Breast epithelium (tissue), 4 donors: ENCODE measurements at regions of chr10 and their contacts with region 1.

Region 1: DNA sequence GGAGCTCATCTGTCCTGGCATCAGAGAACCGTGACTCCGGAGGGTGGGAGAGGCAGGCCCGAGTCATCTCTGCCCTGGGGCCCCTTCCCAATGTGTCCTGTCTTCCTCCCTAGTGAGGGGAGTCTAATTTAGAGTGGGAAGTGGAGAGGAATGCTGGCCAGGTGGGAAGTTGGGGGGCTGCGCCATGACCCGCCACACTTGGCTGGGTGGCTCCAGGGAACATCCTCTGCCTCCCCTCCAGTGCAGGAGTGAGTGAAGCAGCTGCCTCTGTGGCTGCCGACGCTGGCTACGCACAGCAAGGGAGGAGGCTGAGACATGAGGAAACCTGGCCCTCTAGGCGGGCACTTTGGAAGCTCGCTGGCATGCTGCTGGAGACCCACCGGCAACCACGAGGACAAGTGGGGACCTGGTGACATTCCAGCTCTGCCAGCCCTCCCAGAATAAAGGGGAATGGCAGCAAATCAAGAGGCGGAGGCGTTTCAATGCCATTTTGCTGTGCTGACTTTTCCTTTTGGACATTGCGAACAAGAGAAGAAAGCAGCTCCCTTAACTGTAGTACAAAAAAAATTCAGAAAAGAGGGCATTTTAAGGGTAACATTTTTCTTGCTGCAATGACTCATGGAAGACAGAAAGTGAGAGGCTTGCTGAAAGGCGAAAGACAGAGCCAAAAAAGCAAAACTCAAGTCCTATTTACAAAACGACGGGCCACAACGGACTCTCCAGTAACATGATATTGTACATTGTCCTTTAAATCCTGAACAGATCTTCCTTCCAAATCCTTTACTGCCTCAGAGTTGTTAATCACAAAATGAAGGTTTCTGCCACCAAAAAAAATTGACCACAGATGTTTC is 121.2 kb upstream of the PITRM1 start:
- DNase-seq: peak in 1 of 2 donors; percentile 65
- H3K4me3 ChIP-seq: peak overlapping the region in 1 of 3 donors; percentile 1
- H3K27ac ChIP-seq: peak overlapping the region; percentile 65 to 81
- H3K4me1 ChIP-seq: no peaks in the 10 kb centered on the region
- H3K27me3 ChIP-seq: no peaks in the 10 kb centered on the region
- CTCF ChIP-seq: no peak
- POLR2A ChIP-seq: no peak

Region 2: GRCh38 chr10:2076528-2076927 is 1217.3 kb before region 1 on chr10:
- intact Hi-C with region 1: no loop called
- DNase-seq: no peak
- H3K4me3 ChIP-seq: no peak overlapping the region
- H3K27ac ChIP-seq: no peak overlapping the region
- H3K4me1 ChIP-seq: no peaks in the 10 kb centered on the region
- H3K27me3 ChIP-seq: no peaks in the 10 kb centered on the region
- CTCF ChIP-seq: no peak
- POLR2A ChIP-seq: no peak

Region 3: DNA sequence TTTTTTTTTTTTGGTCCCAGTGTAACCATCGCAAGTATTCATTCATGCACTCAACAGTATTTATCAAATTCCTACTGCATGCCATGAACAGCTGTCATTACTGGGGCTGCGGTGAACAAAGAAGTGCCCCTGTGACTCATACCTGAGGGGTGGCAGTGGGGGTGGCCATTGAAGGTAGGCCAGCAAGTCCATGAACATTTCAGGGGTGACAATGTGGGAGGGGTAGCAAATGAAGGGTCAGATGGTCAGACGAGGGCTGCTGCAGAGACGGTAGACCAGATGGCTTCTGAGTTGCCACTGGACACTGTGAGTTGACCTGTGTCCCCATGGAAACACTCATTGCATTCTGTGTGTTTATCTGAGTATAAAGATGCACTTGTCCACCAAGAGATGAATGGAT is 28.7 kb before region 1 on chr10:
- intact Hi-C with region 1: no loop called
- DNase-seq: no peak
- H3K4me3 ChIP-seq: no peak overlapping the region
- H3K27ac ChIP-seq: peak overlapping the region in 1 of 2 donors; percentile 60
- H3K4me1 ChIP-seq: no peaks in the 10 kb centered on the region
- H3K27me3 ChIP-seq: no peaks in the 10 kb centered on the region
- CTCF ChIP-seq: no peak
- POLR2A ChIP-seq: no peak

Region 4: DNA sequence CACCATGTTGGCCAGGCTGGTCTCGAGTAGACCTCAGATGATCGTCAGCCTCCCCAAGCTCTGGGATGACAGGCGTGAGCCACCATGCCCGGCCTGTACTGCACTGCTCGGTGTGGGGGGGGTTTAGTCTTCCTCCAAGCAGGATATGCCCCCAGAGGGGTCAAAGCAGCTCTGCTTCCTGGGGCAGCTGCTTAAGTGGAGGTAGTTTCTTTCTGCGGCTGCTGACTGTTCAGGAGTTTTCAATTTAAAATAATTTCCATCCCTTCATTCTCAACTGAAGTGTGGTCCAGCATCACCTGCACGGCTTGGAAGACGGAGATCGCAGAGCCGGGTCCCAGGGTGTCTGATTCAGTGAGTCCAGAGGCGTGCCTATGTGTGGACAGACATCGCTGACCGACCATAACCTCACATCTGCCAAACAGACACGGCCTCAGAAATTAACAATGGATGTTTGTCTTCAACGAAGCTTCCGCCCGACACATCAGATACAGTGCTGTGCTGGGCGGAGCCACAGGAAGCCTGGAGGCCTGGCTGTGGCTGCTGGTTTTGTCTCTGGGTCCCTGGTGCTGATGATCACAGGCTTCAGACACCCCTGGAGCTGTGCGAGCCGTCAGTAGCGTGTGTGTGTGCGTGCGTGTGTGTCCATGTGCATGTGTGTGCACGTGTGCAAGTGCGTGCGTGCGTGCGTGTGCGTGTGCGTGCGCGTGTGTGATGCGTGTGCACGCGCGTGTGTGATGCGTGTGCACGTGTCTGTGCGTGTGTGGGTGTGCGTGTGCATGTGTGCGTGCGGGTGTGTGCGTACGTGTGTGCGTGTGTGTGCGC is 105.2 kb after region 1 on chr10:
- intact Hi-C with region 1: loop called (anchors 5 kb)
- DNase-seq: peak in 1 of 2 donors; percentile 55
- H3K4me3 ChIP-seq: peak overlapping the region in 1 of 3 donors; percentile 44
- H3K27ac ChIP-seq: peak overlapping the region in 1 of 2 donors; percentile 30
- H3K4me1 ChIP-seq: no peaks in the 10 kb centered on the region
- H3K27me3 ChIP-seq: no peaks in the 10 kb centered on the region
- CTCF ChIP-seq: no peak
- POLR2A ChIP-seq: no peak

Region 5: GRCh38 chr10:4541292-4541691 is 1247.5 kb after region 1 on chr10:
- intact Hi-C with region 1: no loop called
- DNase-seq: peak in 1 of 2 donors; percentile 21
- H3K4me3 ChIP-seq: no peak overlapping the region
- H3K27ac ChIP-seq: no peak overlapping the region
- H3K4me1 ChIP-seq: no peaks in the 10 kb centered on the region
- H3K27me3 ChIP-seq: no peaks in the 10 kb centered on the region
- CTCF ChIP-seq: no peak
- POLR2A ChIP-seq: no peak